Transverse colon (tissue), 4 donors: ENCODE measurements at regions of chr3 and their contacts with region 1.

Region 1: GRCh38 chr3:50192689-50193141 is 1.3 kb downstream of the GNAT1 start:
- DNase-seq: peak; percentile 78
- H3K4me3 ChIP-seq: no peak overlapping the region
- H3K27ac ChIP-seq: no peak overlapping the region
- H3K4me1 ChIP-seq: peaks cover 0 to 20% (median 15%) of the 10 kb centered on the region in 4 donors
- H3K27me3 ChIP-seq: peaks cover 40% of the 10 kb centered on the region
- CTCF ChIP-seq: peak; percentile 93 to 96 (median 93)
- EP300 ChIP-seq: no peak
- POLR2A ChIP-seq: no peak

Region 2: GRCh38 chr3:50028336-50028735 is 164.4 kb before region 1 on chr3:
- in situ Hi-C with region 1: no loop called
- intact Hi-C with region 1: no loop called
- DNase-seq: no peak
- H3K4me3 ChIP-seq: no peak overlapping the region
- H3K27ac ChIP-seq: no peak overlapping the region
- H3K4me1 ChIP-seq: no peaks in the 10 kb centered on the region
- H3K27me3 ChIP-seq: no peaks in the 10 kb centered on the region
- CTCF ChIP-seq: no peak
- EP300 ChIP-seq: no peak
- POLR2A ChIP-seq: no peak

Region 3: GRCh38 chr3:50272911-50273693 is 80.4 kb after region 1 on chr3:
- in situ Hi-C with region 1: loop called in 1 of 4 experiments (anchors 5 kb)
- intact Hi-C with region 1: loop called (anchors 5 kb)
- DNase-seq: peak; percentile 92
- H3K4me3 ChIP-seq: peak overlapping the region in 2 of 4 donors; percentile 35 to 40
- H3K27ac ChIP-seq: peak overlapping the region in 3 of 4 donors; percentile 4 to 33 (median 23)
- H3K4me1 ChIP-seq: peaks cover 19 to 54% (median 36%) of the 10 kb centered on the region in 4 donors
- H3K27me3 ChIP-seq: peaks cover 33% of the 10 kb centered on the region
- CTCF ChIP-seq: peak; percentile 98 to 100 (median 99)
- EP300 ChIP-seq: no peak
- POLR2A ChIP-seq: no peak